WTC11 (cell line): ENCODE measurements at regions of chr17 and their contacts with region 1.

Region 1: GRCh38 chr17:63697341-63698286 is 2.3 kb downstream of the LIMD2 start:
- DNase-seq: peak; percentile 70
- ATAC-seq: peak; percentile 3
- H3K4me3 Mint-ChIP-seq: peak overlapping the region; percentile 69
- H3K27ac Mint-ChIP-seq: peak overlapping the region; percentile 70
- H3K4me1 Mint-ChIP-seq: peaks cover 47% of the 10 kb centered on the region
- H3K27me3 Mint-ChIP-seq: peaks cover 6% of the 10 kb centered on the region; the same call in 1 of the 2 replicates
- CTCF ChIP-seq: peak; percentile 20

Region 2: GRCh38 chr17:63714547-63715277 is 17.1 kb after region 1 on chr17:
- CTCF ChIA-PET with region 1: interaction called, 11 read pairs
- POLR2A ChIA-PET with region 1: no interaction called
- DNase-seq: no peak
- ATAC-seq: no peak
- H3K4me3 Mint-ChIP-seq: no peak overlapping the region
- H3K27ac Mint-ChIP-seq: no peak overlapping the region
- H3K4me1 Mint-ChIP-seq: no peaks in the 10 kb centered on the region
- H3K27me3 Mint-ChIP-seq: no peaks in the 10 kb centered on the region
- CTCF ChIP-seq: no peak